Ovary (tissue), 10 donors: ENCODE measurements at regions of chr17 and their contacts with region 1.

Region 1: DNA sequence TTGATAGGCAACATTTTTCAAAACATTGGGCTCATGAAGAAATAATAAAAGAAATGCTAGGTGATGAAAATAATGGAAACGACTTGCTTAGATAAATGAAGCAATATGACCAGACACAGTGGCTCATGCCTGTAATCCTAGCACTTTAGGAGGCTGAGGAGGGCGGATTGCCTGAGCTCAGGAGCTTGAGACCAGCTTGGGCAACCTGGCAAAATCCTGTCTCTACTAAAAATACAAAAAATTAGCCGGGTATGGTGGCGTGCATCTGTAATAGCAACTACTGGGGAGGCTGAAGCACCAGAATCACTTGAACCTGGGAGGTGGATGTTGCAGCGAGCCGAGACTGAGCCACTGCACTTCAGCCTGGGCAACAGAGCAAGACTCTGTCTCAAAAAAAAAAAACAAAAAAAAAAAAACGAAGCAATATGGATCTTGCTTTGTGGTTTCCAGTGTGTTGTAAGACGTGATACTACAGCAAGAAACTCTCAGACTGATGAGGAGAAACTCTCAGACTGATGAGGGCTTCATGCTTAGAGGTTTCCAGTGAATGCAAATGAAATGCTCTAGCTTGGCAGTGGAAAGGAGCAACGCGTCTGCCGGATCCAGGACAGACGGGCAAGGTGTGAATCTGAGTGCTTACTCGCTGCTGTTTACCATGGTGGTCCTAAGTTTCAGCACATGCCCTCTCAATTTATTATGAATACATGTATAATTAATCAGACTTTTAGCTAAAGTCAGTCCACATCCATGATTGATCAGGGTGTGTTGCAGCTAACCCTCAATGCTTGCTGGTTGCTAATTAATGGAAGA is 11.5 kb upstream of the IGF2BP1 start:
- DNase-seq: no peak
- H3K4me3 ChIP-seq: no peak overlapping the region
- H3K27ac ChIP-seq: no peak overlapping the region
- H3K4me1 ChIP-seq: no peaks in the 10 kb centered on the region
- H3K27me3 ChIP-seq: no peaks in the 10 kb centered on the region
- CTCF ChIP-seq: no peak
- EP300 ChIP-seq: no peak
- POLR2A ChIP-seq: no peak

Region 2: DNA sequence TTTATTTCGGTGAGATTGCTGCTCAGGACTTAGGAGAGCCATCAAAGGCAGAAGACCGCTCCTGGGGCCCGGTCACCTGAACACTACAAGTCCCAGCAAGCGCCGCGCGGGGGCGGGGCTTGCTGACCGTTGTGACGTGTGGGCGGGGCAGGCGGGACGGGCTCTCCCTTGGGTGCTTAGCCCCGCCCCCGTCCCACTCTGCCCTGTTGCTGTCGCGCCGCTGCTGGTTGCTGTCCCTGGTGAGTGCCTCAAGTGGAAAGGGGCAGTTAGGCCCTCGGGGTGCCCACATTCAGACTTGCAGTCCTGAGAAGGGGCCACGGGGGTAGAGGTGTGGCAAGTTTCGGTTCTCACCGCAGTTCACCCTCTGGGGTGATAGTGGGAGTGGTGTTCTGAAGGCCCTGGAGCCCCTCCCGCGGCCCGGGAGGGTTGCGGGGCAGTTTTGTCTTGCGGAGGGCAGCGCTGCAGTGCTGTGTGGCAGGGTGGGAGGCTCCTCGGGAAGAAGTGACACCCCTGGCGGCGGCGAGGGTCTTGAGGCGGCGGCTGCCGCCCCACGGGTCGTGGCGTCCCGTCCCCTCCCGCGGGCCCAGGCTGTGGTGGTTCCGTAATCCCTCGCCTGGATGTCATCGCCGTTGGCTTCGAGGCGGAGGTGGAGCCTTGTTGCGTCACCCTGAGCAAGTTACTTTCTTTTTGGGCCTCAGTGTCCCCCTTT is 154.6 kb before region 1 on chr17 and contains the start of gene CALCOCO2:
- intact Hi-C with region 1: no loop called
- DNase-seq: peak; percentile 91 to 95 (median 93)
- H3K4me3 ChIP-seq: peak within 1 kb of the TSS; percentile 91
- H3K27ac ChIP-seq: peak within 1 kb of the TSS; percentile 82 to 93
- H3K4me1 ChIP-seq: peaks cover 12% of the 10 kb centered on the region
- H3K27me3 ChIP-seq: no peaks in the 10 kb centered on the region
- CTCF ChIP-seq: peak in 1 of 3 donors; percentile 46
- EP300 ChIP-seq: no peak
- POLR2A ChIP-seq: peak; percentile 94
- total RNA-seq, gene CALCOCO2: 72.1 to 180 (median 159) TPM

Region 3: DNA sequence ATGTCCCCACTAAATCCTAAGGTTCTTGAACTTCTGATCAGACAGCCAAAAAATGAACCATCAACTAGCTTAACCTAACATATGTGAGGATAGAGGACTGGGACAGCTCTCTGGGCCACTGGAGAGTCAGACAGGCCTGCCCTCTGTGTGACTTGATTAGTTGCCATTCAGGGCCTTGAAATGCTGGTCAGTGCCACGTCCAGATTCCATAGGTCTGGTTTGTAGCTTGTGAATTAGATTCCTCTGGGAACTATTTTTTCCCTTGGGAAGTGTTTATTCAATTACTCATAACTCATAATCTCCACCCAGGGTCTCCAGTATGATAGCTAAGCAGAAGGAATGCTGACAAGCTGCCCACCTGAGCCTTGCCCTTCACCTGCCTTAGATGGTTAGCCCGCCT is 59.7 kb after region 1 on chr17:
- intact Hi-C with region 1: loop called in 1 of 4 experiments (anchors 10 kb)
- DNase-seq: no peak
- H3K4me3 ChIP-seq: no peak overlapping the region
- H3K27ac ChIP-seq: no peak overlapping the region
- H3K4me1 ChIP-seq: no peaks in the 10 kb centered on the region
- H3K27me3 ChIP-seq: no peaks in the 10 kb centered on the region
- CTCF ChIP-seq: no peak
- EP300 ChIP-seq: no peak
- POLR2A ChIP-seq: no peak